T-cell (primary cell): ENCODE measurements at regions of chr11 and their contacts with region 1.

Region 1: GRCh38 chr11:108147150-108147549 is 25.8 kb downstream of the ACAT1 start:
- DNase-seq: no peak
- ATAC-seq: no peak
- H3K4me3 ChIP-seq: no peak overlapping the region
- H3K4me3 Mint-ChIP-seq: no peak overlapping the region
- H3K27ac ChIP-seq: no peak overlapping the region
- H3K27ac Mint-ChIP-seq: no peak overlapping the region
- H3K4me1 ChIP-seq: no peaks in the 10 kb centered on the region
- H3K4me1 Mint-ChIP-seq: peaks cover 11 to 18% (median 15%) of the 10 kb centered on the region in 3 donors
- H3K27me3 ChIP-seq: no peaks in the 10 kb centered on the region
- H3K27me3 Mint-ChIP-seq: no peaks in the 10 kb centered on the region

Region 2: GRCh38 chr11:108340970-108341369 is 193.8 kb after region 1 on chr11:
- CTCF ChIA-PET with region 1: no interaction called
- POLR2A ChIA-PET with region 1: no interaction called
- DNase-seq: no peak
- ATAC-seq: peak in 1 of 4 experiments; percentile 38
- H3K4me3 ChIP-seq: no peak overlapping the region
- H3K4me3 Mint-ChIP-seq: no peak overlapping the region
- H3K27ac ChIP-seq: no peak overlapping the region
- H3K27ac Mint-ChIP-seq: no peak overlapping the region
- H3K4me1 ChIP-seq: no peaks in the 10 kb centered on the region
- H3K4me1 Mint-ChIP-seq: peaks cover 28 to 33% (median 29%) of the 10 kb centered on the region in 3 donors
- H3K27me3 ChIP-seq: no peaks in the 10 kb centered on the region
- H3K27me3 Mint-ChIP-seq: no peaks in the 10 kb centered on the region

Region 3: DNA sequence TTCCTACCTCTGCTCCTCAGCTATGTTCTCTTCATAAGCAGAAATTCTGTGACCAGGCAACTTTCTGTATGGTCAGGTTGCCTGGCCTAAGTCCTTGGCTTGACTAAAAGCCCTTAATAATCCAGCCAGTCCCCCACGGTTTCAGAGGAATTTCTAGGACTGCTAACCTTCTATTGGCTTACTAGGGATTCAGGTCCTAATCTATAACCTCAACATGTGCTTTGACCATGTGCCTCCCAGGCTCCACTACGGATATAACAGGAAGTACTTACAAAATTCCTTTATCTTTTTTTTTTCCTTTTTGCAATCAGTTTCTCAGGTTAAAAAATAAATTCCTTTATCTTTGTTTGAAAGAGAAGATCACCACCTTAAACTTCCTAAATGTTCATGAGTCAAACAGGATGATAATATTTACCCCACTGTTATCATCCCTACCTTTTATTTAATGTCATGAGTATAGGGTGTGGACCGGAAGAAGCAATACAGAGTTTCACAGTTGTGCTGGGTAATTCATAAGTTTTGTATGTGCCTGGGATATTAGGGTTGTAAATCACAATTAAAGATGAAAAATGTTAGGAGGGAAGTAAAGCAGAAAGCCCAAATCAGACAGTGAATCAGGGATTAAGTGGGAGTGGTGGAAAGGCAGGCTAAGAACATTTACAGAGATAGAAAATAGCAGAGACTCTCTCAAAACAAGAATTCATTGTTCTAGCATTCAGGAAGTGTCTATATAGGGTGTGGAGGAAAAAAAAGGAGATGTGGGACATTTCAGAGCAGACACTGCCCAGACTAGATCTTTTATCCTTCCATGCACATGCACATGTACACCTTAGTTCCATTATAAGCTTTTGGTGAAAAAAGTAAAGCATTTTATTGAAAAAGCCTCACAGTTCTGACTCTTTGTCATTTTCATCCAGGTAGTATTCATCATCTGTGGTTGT is 361.8 kb after region 1 on chr11:
- CTCF ChIA-PET with region 1: no interaction called
- POLR2A ChIA-PET with region 1: no interaction called
- DNase-seq: no peak
- ATAC-seq: no peak
- H3K4me3 ChIP-seq: no peak overlapping the region
- H3K4me3 Mint-ChIP-seq: no peak overlapping the region
- H3K27ac ChIP-seq: no peak overlapping the region
- H3K27ac Mint-ChIP-seq: no peak overlapping the region
- H3K4me1 ChIP-seq: no peaks in the 10 kb centered on the region
- H3K4me1 Mint-ChIP-seq: peaks cover 0 to 2% (median 0%) of the 10 kb centered on the region in 3 donors
- H3K27me3 ChIP-seq: no peaks in the 10 kb centered on the region
- H3K27me3 Mint-ChIP-seq: no peaks in the 10 kb centered on the region

Region 4: GRCh38 chr11:108797578-108798100 is 650.5 kb after region 1 on chr11:
- CTCF ChIA-PET with region 1: no interaction called
- POLR2A ChIA-PET with region 1: interaction called in 1 of 2 experiments, 13 read pairs
- DNase-seq: no peak
- ATAC-seq: no peak
- H3K4me3 ChIP-seq: no peak overlapping the region
- H3K4me3 Mint-ChIP-seq: no peak overlapping the region
- H3K27ac ChIP-seq: no peak overlapping the region
- H3K27ac Mint-ChIP-seq: no peak overlapping the region
- H3K4me1 ChIP-seq: no peaks in the 10 kb centered on the region
- H3K4me1 Mint-ChIP-seq: peaks cover 7 to 15% (median 10%) of the 10 kb centered on the region in 3 donors
- H3K27me3 ChIP-seq: no peaks in the 10 kb centered on the region
- H3K27me3 Mint-ChIP-seq: no peaks in the 10 kb centered on the region